ENCODE measurements at regions of chr10 and their contacts with region 1.

Region 1: DNA sequence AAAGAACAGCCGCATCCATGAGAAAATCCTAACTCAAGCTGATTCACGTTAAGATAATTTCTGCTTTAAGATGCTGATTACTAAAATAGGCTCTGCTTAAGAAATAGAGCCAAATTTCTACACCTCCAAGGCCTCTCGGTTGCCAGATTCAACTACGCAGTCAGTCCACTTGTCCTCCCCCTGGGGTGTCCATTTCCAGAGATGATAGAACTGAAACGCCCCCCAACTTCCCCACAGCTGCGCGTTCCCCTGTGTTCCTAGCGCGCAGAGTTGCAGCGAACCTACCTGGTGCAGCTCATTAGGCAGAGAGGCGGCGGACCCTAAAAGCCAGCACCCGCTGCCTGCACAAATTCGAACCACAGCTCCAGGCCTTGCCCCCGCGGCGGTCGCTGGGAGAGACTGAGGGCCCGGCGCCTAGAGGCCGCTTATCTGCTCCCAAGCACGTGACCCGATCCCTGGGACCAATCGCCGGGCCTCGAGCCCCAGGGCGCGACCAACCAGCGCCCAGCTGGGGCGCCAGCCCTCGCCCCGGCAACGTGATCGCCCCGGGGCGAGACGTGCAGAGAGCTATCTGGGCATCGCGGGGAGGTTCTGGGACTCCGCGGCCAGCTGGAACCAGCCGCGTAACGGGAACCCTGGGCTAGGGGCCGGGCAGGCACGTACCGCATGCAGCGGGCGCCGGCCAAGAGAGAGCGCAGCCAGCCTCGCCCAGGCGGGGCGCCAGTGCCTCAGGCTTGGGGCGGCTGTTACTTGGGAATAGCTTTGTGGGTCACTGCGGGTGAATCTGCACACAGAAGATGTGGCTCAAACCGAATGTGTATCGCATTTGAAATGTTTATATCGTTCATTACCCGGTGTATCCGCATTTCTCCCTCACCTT is at the start of gene PPP1R3C:
- DNase-seq: peak; percentile 91 to 93
- ATAC-seq: peak; percentile 97 to 98
- H3K4me3 ChIP-seq: peak within 1 kb of the TSS; percentile 85
- H3K27ac ChIP-seq: peak within 1 kb of the TSS; percentile 76 to 84
- H3K4me1 ChIP-seq: peaks cover 31% of the 10 kb centered on the region; the same call in 2 of the 3 replicates
- CTCF ChIP-seq: peak; percentile 36
- EP300 ChIP-seq: no peak
- POLR2A ChIP-seq: peak; percentile 81
- RAD21 ChIP-seq: peak; percentile 61 to 74
- polyA plus RNA-seq, gene PPP1R3C: 19.7 and 20.0 TPM in 2 replicates

Region 2: GRCh38 chr10:91381257-91381891 is 251.5 kb before region 1 on chr10:
- CTCF ChIA-PET with region 1: interaction called, 10 read pairs
- POLR2A ChIA-PET with region 1: no interaction called
- DNase-seq: no peak
- ATAC-seq: no peak
- H3K4me3 ChIP-seq: no peak overlapping the region
- H3K27ac ChIP-seq: no peak overlapping the region
- H3K4me1 ChIP-seq: no peaks in the 10 kb centered on the region
- CTCF ChIP-seq: no peak
- EP300 ChIP-seq: no peak
- POLR2A ChIP-seq: no peak
- RAD21 ChIP-seq: no peak

Region 3: DNA sequence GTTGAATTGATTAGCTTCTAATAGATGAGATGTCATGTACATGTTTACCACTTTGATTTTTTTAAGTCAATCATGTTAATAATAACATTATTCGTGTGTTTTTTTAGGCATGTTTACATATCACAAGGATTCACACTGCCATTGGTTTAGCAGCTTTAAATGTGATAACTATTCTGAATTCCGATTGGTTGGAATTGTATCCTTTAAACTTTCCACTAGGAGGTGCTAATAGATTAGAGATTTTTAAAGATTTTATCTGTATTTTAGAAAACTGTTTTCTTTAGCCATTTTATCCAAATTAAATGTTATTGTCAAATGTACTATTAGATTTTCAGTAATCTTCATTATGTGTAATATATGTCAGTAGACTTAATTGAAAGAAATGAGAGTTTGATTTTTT is 139.6 kb before region 1 on chr10:
- CTCF ChIA-PET with region 1: interaction called, 116 read pairs
- POLR2A ChIA-PET with region 1: interaction called, 3 read pairs
- DNase-seq: peak; percentile 15 to 61
- ATAC-seq: peak in 1 of 2 experiments; percentile 55; a peak in 1 of 6 replicates
- H3K4me3 ChIP-seq: no peak overlapping the region
- H3K27ac ChIP-seq: no peak overlapping the region
- H3K4me1 ChIP-seq: peaks cover 6% of the 10 kb centered on the region; the same call in 2 of the 3 replicates
- CTCF ChIP-seq: peak; percentile 64
- EP300 ChIP-seq: no peak
- POLR2A ChIP-seq: no peak
- RAD21 ChIP-seq: peak; percentile 67 to 88

Region 4: GRCh38 chr10:91590142-91590903 is 42.6 kb before region 1 on chr10:
- CTCF ChIA-PET with region 1: interaction called, 9 read pairs
- POLR2A ChIA-PET with region 1: interaction called, 37 read pairs
- DNase-seq: peak; percentile 57 to 96
- ATAC-seq: peak; percentile 77 to 85
- H3K4me3 ChIP-seq: 0 out of 3 replicates have a peak overlapping the region, but pooled peaks have one; percentile 0
- H3K27ac ChIP-seq: peak overlapping the region; percentile 93 to 94
- H3K4me1 ChIP-seq: peaks cover 66% of the 10 kb centered on the region
- CTCF ChIP-seq: no peak
- EP300 ChIP-seq: peak in 1 of 2 experiments; percentile 76; a peak in 3 of 5 replicates
- POLR2A ChIP-seq: no peak
- RAD21 ChIP-seq: peak; percentile 24 to 38; a peak in 3 of 5 replicates

Region 5: GRCh38 chr10:91643700-91644099 is 10.8 kb after region 1 on chr10:
- CTCF ChIA-PET with region 1: interaction called, 16 read pairs
- POLR2A ChIA-PET with region 1: interaction called, 4 read pairs
- DNase-seq: peak in 1 of 2 experiments; percentile 66
- ATAC-seq: peak; percentile 68 to 96; a peak in 5 of 6 replicates
- H3K4me3 ChIP-seq: no peak overlapping the region
- H3K27ac ChIP-seq: peak overlapping the region; percentile 60 to 66; a peak in 4 of 6 replicates
- H3K4me1 ChIP-seq: peaks cover 21% of the 10 kb centered on the region
- CTCF ChIP-seq: peak; percentile 40
- EP300 ChIP-seq: no peak
- POLR2A ChIP-seq: no peak
- RAD21 ChIP-seq: peak; percentile 50 to 72; a peak in 4 of 5 replicates